ENCODE measurements at regions of chr20 and their contacts with region 1.

Region 1: DNA sequence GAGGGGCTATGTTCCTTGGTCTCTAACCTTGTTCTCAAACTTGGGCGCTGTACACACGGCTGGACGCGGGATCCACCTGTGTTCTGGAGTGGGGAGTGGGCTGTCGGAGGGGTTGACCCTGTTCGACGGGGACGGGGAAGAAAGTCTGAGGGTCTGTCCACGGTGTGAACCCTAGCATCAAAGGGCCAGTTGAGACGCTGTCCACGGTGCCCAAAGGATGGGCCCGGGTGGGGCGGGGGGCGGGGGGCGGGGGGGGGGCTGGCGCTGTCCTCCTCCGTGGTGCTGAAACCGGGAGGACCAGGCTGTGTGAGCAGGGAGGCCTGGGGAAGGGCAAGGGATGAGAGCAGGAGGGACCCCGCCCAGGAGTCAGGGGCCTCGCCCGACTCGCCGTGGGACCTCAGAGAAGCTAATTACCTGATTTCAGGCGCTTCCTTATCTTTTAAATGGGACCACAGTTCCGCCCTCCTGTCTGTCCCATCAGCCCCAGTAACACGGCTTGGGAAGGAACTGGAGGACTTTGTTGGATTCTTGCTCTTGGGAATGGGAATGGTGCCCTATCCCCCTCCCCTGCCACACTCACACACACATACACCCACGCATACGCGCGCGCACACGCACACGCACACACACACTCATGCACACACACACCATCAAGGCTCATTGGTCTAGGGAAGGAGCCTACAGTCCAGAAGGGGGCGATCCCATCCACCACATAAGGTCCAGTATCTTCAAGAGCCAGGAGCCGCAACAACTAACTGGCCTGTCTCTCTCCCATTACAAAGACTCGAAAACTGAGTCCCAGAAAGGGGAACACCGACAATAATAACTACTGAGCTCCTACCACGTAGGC is 1.0 kb upstream of the VSTM2L start:
- DNase-seq: no peak
- ATAC-seq: peak; percentile 94
- H3K4me3 ChIP-seq: peak overlapping the region; percentile 61; the same call in 1 of the 2 replicates
- H3K27ac ChIP-seq: no peak overlapping the region
- H3K4me1 ChIP-seq: no peaks in the 10 kb centered on the region; the same call in 1 of the 2 replicates
- H3K27me3 ChIP-seq: peaks cover 1 to 4% of the 10 kb centered on the region in 2 experiments; a peak in 1 of 4 replicates
- CTCF ChIP-seq: peak; percentile 69 to 75 (median 72)
- EP300 ChIP-seq: no peak
- POLR2A ChIP-seq: no peak
- RAD21 ChIP-seq: peak; percentile 76

Region 2: GRCh38 chr20:37651932-37652331 is 249.9 kb before region 1 on chr20:
- CTCF ChIA-PET with region 1: no interaction called
- POLR2A ChIA-PET with region 1: no interaction called
- RAD21 ChIA-PET with region 1: no interaction called
- SMC1A ChIA-PET with region 1: no interaction called
- in situ Hi-C with region 1: no loop called
- intact Hi-C with region 1: loop called (anchors 10 kb)
- DNase-seq: no peak
- ATAC-seq: peak; percentile 86
- H3K4me3 ChIP-seq: no peak overlapping the region
- H3K27ac ChIP-seq: no peak overlapping the region
- H3K4me1 ChIP-seq: no peaks in the 10 kb centered on the region
- H3K27me3 ChIP-seq: peaks cover 0 to 7% of the 10 kb centered on the region in 2 experiments; a peak in 2 of 4 replicates
- CTCF ChIP-seq: peak; percentile 54 to 60 (median 56); a peak in 4 of 6 replicates
- EP300 ChIP-seq: no peak
- POLR2A ChIP-seq: no peak
- RAD21 ChIP-seq: peak; percentile 76

Region 3: GRCh38 chr20:37867289-37868195 is 34.3 kb before region 1 on chr20:
- CTCF ChIA-PET with region 1: no interaction called
- POLR2A ChIA-PET with region 1: no interaction called
- RAD21 ChIA-PET with region 1: no interaction called
- SMC1A ChIA-PET with region 1: no interaction called
- in situ Hi-C with region 1: no loop called
- intact Hi-C with region 1: no loop called
- DNase-seq: no peak
- ATAC-seq: no peak
- H3K4me3 ChIP-seq: no peak overlapping the region
- H3K27ac ChIP-seq: no peak overlapping the region
- H3K4me1 ChIP-seq: no peaks in the 10 kb centered on the region
- H3K27me3 ChIP-seq: no peaks in the 10 kb centered on the region
- CTCF ChIP-seq: no peak
- EP300 ChIP-seq: no peak
- POLR2A ChIP-seq: no peak
- RAD21 ChIP-seq: no peak

Region 4: GRCh38 chr20:37922016-37922415 is 20.1 kb after region 1 on chr20:
- CTCF ChIA-PET with region 1: interaction called, 3 read pairs
- POLR2A ChIA-PET with region 1: no interaction called
- RAD21 ChIA-PET with region 1: interaction called, 4 read pairs
- SMC1A ChIA-PET with region 1: interaction called, 3 read pairs
- in situ Hi-C with region 1: no loop called
- intact Hi-C with region 1: loop called (anchors 2 kb)
- DNase-seq: peak; percentile 85
- ATAC-seq: peak; percentile 89
- H3K4me3 ChIP-seq: peak overlapping the region; percentile 25; the same call in 1 of the 2 replicates
- H3K27ac ChIP-seq: peak overlapping the region; percentile 94
- H3K4me1 ChIP-seq: peaks cover 25% of the 10 kb centered on the region
- H3K27me3 ChIP-seq: no peaks in the 10 kb centered on the region
- CTCF ChIP-seq: no peak
- EP300 ChIP-seq: peak; percentile 29 to 62; a peak in 3 of 4 replicates
- POLR2A ChIP-seq: no peak
- RAD21 ChIP-seq: no peak